H1 (cell line): ENCODE measurements at regions of chr11 and their contacts with region 1.

Region 1: GRCh38 chr11:1827095-1827813 is 7.5 kb upstream of the SYT8 start:
- DNase-seq: no peak
- H3K4me3 ChIP-seq: no peak overlapping the region
- H3K27ac ChIP-seq: no peak overlapping the region
- H3K4me1 ChIP-seq: peaks cover 0 to 2% (median 0%) of the 10 kb centered on the region in 4 experiments; a peak in 4 of 7 replicates
- H3K27me3 ChIP-seq: peaks cover 0 to 6% (median 1%) of the 10 kb centered on the region in 4 experiments; a peak in 1 of 7 replicates
- CTCF ChIP-seq: no peak
- EP300 ChIP-seq: no peak
- POLR2A ChIP-seq: no peak
- RAD21 ChIP-seq: no peak

Region 2: GRCh38 chr11:1701091-1701807 is 126.0 kb before region 1 on chr11:
- CTCF ChIA-PET with region 1: interaction called, 20 read pairs
- POLR2A ChIA-PET with region 1: no interaction called
- DNase-seq: no peak
- H3K4me3 ChIP-seq: no peak overlapping the region
- H3K27ac ChIP-seq: no peak overlapping the region
- H3K4me1 ChIP-seq: peaks cover 0 to 5% (median 3%) of the 10 kb centered on the region in 4 experiments; a peak in 2 of 7 replicates
- H3K27me3 ChIP-seq: no peaks in the 10 kb centered on the region
- CTCF ChIP-seq: peak in 2 of 3 experiments; percentile 8 to 17; a peak in 1 of 4 replicates
- EP300 ChIP-seq: no peak
- POLR2A ChIP-seq: no peak
- RAD21 ChIP-seq: no peak

Region 3: DNA sequence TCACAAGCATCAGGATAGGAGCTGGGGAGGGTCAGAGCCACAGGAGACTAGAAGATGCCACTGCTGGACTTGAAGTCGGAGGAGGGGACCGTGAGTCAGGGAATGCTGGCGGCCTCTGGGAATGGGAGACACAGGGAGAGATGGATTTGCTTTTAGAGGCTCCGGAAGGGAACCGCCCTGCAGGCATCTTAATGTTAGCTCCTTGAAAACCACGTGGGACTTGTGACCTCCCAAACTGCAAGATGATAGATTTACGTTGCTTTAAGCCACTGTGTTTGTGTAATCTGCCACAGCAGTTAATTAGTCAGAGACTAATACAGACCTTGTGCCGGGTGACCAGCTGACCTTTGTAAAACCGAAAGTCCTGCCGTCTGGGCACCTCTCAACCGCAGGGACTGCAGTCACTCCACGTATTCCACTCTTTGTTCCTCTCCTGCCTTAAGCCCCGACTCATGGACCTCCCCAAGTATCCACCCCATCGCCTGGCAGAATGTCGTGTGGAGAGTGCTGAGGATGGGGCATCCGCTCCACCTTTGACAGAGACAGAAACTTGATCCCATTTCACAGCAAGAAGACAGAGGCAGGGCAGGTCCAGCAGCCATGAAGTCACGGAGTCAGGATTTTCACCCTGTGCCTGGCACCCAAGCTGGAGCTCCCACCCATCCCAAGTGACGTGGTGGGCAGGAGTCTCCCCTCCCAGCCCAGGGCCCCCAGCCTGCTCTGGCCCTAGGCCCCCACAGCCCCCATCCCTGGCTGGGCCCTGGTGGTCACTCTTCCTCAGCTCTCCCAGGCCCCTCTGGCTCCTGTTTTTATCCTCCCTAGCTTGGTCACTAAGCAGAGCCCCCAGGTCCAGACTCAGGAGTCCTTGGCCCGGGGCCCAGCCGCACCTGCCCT is 44.2 kb before region 1 on chr11:
- CTCF ChIA-PET with region 1: interaction called, 21 read pairs
- POLR2A ChIA-PET with region 1: no interaction called
- DNase-seq: no peak
- H3K4me3 ChIP-seq: no peak overlapping the region
- H3K27ac ChIP-seq: no peak overlapping the region
- H3K4me1 ChIP-seq: peaks cover 2 to 15% (median 4%) of the 10 kb centered on the region in 4 experiments; a peak in 6 of 7 replicates
- H3K27me3 ChIP-seq: peaks cover 0 to 3% (median 0%) of the 10 kb centered on the region in 4 experiments; a peak in 3 of 7 replicates
- CTCF ChIP-seq: no peak
- EP300 ChIP-seq: no peak
- POLR2A ChIP-seq: no peak
- RAD21 ChIP-seq: no peak

Region 4: GRCh38 chr11:1807264-1807995 is 19.8 kb before region 1 on chr11:
- CTCF ChIA-PET with region 1: interaction called, 38 read pairs
- POLR2A ChIA-PET with region 1: no interaction called
- DNase-seq: no peak
- H3K4me3 ChIP-seq: no peak overlapping the region
- H3K27ac ChIP-seq: no peak overlapping the region
- H3K4me1 ChIP-seq: 0 out of 7 replicates have a peak, but pooled peaks cover 0 to 3% (median 0%) of the 10 kb centered on the region in 4 experiments
- H3K27me3 ChIP-seq: peaks cover 0 to 2% (median 1%) of the 10 kb centered on the region in 4 experiments; a peak in 2 of 7 replicates
- CTCF ChIP-seq: peak in 2 of 3 experiments; percentile 29 to 41; a peak in 3 of 4 replicates
- EP300 ChIP-seq: no peak
- POLR2A ChIP-seq: no peak
- RAD21 ChIP-seq: peak; percentile 6 to 28; a peak in 1 of 4 replicates

Region 5: DNA sequence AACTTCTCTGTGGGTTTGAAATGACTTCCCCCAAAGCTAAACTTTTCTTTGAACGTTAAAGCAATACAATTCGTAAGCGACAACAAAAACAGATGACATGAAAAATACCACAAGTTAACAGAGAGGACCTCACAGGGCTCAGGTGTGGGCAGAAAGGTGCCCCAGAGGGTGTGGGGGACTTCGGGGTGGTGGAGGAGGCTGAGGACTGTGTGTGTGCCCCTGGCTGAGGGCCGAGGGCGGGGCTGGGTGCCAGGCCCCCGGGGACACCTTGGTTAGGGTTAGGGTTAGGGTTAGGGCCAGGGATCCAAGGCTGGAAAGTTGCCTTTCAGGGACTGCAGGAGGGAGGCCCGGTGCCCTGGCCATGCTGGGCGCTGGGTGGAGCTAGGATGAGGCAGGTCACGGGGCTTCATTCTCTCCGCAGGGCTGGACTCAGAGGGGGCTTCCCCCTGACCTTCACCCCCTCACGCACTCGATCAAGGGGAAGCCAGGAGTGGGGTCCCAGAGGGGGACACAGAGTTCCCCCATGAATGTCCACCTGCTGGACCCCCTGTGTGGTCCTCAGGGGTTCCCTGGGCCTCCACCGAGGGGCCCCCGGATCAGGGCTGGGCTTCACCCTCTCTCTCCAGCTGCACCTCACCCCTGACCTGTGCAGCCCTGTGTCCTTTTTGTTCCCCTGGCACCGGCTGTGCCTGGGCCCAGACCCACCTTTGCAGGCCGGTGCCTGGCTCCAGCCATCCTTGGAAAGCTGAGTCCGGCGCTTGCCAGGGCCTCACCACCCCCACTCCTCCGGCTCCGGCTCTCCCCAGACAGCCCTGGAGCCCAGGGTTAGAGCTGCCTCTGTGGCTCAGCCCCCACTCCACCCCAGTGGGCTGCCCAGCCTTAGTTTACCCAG is 18.6 kb after region 1 on chr11:
- CTCF ChIA-PET with region 1: interaction called, 22 read pairs
- POLR2A ChIA-PET with region 1: no interaction called
- DNase-seq: no peak
- H3K4me3 ChIP-seq: no peak overlapping the region
- H3K27ac ChIP-seq: no peak overlapping the region
- H3K4me1 ChIP-seq: peaks cover 0 to 3% (median 0%) of the 10 kb centered on the region in 4 experiments; a peak in 1 of 7 replicates
- H3K27me3 ChIP-seq: no peaks in the 10 kb centered on the region
- CTCF ChIP-seq: no peak
- EP300 ChIP-seq: no peak
- POLR2A ChIP-seq: no peak
- RAD21 ChIP-seq: no peak

Region 6: GRCh38 chr11:1882519-1883238 is 55.4 kb after region 1 on chr11:
- CTCF ChIA-PET with region 1: interaction called, 24 read pairs
- POLR2A ChIA-PET with region 1: no interaction called
- DNase-seq: peak; percentile 54 to 94
- H3K4me3 ChIP-seq: no peak overlapping the region
- H3K27ac ChIP-seq: no peak overlapping the region
- H3K4me1 ChIP-seq: peaks cover 0 to 5% (median 2%) of the 10 kb centered on the region in 4 experiments; a peak in 3 of 7 replicates
- H3K27me3 ChIP-seq: no peaks in the 10 kb centered on the region; a peak in 1 of 7 replicates
- CTCF ChIP-seq: peak; percentile 91 to 94 (median 92)
- EP300 ChIP-seq: no peak
- POLR2A ChIP-seq: no peak
- RAD21 ChIP-seq: peak; percentile 89 to 94